AG04450 (cell line): ENCODE measurements at regions of chr4 and their contacts with region 1.

Region 1: GRCh38 chr4:4430492-4431197 is 43.7 kb downstream of the NSG1 start:
- DNase-seq: peak; percentile 49
- H3K4me3 ChIP-seq: no peak overlapping the region
- H3K27ac ChIP-seq: no peak overlapping the region
- H3K27me3 ChIP-seq: no peaks in the 10 kb centered on the region
- CTCF ChIP-seq: peak; percentile 82

Region 2: DNA sequence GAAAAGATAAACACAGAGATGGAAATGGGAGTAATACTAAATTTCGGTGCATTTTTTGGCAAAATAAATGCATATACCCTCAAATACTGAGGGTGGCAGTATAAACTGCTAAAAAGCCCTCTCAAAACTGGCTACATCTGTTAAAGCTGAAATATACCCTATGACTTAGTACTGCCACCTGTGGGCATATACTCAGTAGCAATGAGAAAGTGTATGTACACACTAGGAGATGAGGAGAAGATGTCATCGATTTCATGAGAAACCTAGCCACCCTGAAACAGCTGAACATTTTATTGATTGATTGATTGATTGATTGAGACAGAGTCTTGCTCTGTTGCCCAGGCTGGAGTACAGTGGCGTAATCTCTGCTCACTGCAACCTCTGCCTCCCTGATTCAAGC is 170.4 kb before region 1 on chr4:
- CTCF ChIA-PET with region 1: interaction called, 24 read pairs
- POLR2A ChIA-PET with region 1: no interaction called
- DNase-seq: no peak
- H3K4me3 ChIP-seq: no peak overlapping the region
- H3K27ac ChIP-seq: no peak overlapping the region
- H3K27me3 ChIP-seq: peaks cover 16% of the 10 kb centered on the region
- CTCF ChIP-seq: peak; percentile 49

Region 3: GRCh38 chr4:4420421-4420820 is 10.2 kb before region 1 on chr4:
- CTCF ChIA-PET with region 1: interaction called, 13 read pairs
- POLR2A ChIA-PET with region 1: no interaction called
- DNase-seq: no peak
- H3K4me3 ChIP-seq: no peak overlapping the region
- H3K27ac ChIP-seq: no peak overlapping the region
- H3K27me3 ChIP-seq: no peaks in the 10 kb centered on the region
- CTCF ChIP-seq: no peak

Region 4: GRCh38 chr4:4455210-4455865 is 24.7 kb after region 1 on chr4:
- CTCF ChIA-PET with region 1: interaction called, 13 read pairs
- POLR2A ChIA-PET with region 1: no interaction called
- DNase-seq: no peak
- H3K4me3 ChIP-seq: no peak overlapping the region
- H3K27ac ChIP-seq: no peak overlapping the region
- H3K27me3 ChIP-seq: no peaks in the 10 kb centered on the region
- CTCF ChIP-seq: no peak

Region 5: GRCh38 chr4:4461850-4462249 is 31.2 kb after region 1 on chr4:
- CTCF ChIA-PET with region 1: interaction called, 14 read pairs
- POLR2A ChIA-PET with region 1: no interaction called
- DNase-seq: no peak
- H3K4me3 ChIP-seq: no peak overlapping the region
- H3K27ac ChIP-seq: no peak overlapping the region
- H3K27me3 ChIP-seq: no peaks in the 10 kb centered on the region
- CTCF ChIP-seq: no peak

Region 6: DNA sequence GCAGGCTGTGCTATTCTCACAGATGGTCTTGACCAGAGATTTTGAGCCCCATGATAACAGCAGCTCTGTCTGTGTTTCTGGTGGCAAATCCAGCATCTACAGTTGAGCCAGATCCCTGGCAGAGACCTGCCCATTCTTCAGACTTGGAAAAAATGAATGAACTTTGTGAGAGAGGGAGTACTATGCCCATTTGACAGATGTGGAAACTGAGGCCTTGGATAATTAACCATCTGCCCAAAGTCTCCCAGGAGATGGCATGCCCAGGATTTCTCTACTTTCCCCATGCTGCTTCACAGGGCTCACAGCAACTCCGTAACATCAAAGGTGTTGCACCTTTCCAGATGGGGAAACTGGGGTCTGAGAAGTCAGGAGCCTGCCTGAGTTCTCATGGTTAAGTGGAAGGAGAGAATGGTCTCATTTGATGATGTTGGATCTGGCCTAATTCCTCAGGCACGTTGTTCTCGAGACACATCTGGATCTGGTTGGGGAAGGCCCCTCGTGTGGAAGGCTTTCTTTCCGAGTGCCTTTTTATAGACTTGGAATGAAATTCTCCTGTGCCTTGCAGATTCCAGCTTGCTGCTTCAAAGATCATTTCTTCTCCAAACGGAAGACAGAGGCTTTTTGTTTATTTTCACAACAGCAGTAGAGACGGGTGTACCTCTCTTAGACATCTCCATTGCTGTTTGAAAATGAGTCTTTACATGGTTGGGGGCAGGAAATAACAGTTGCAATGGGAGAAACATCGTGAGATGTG is 184.5 kb after region 1 on chr4:
- CTCF ChIA-PET with region 1: no interaction called
- POLR2A ChIA-PET with region 1: no interaction called
- DNase-seq: peak; percentile 26
- H3K4me3 ChIP-seq: no peak overlapping the region
- H3K27ac ChIP-seq: peak overlapping the region; percentile 77
- H3K27me3 ChIP-seq: no peaks in the 10 kb centered on the region
- CTCF ChIP-seq: no peak